ENCODE measurements at regions of chr17 and their contacts with region 1.

Region 1: DNA sequence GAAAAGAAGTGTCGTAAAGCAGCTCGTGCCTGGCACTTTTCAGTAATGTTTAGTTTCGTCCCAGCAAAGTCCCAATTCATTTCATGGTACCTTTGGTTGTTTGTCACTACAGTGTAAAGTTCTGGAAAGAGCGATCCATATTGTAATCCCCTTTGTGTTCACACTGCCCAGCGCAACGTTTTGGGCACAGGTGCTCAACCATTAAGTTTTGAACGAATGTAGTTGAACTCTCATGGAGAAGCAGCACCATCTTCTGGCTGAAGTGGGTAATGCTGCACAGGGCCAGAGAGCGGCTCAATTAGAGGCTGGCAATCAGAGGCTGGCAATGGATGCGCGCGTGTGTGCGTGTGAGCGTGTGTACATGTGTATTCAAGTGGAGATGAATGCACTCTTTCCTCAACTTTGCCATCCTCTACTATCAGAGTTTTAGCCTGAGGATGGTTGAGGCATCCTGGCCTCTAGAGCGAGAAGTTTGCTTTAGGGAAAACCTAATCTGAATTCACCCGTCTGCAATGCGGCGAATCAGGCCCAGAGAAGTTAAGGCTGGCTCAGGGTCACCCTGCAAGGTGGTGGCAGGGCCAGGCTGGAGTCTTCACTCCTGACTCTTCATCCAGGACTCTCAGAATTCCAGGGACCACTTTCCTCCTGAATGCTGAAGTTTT is 29.9 kb downstream of the DYNLL2 start:
- DNase-seq: peak; percentile 68
- ATAC-seq: peak; percentile 95
- H3K4me3 Mint-ChIP-seq: no peak overlapping the region
- H3K27ac Mint-ChIP-seq: no peak overlapping the region
- H3K4me1 Mint-ChIP-seq: no peaks in the 10 kb centered on the region
- H3K27me3 Mint-ChIP-seq: peaks cover 25% of the 10 kb centered on the region
- CTCF ChIP-seq: peak; percentile 53

Region 2: GRCh38 chr17:57861000-57861789 is 251.9 kb before region 1 on chr17:
- CTCF ChIA-PET with region 1: interaction called, 58 read pairs
- POLR2A ChIA-PET with region 1: no interaction called
- intact Hi-C with region 1: loop called (anchors 1 kb)
- DNase-seq: no peak
- ATAC-seq: peak; percentile 69
- H3K4me3 Mint-ChIP-seq: peak overlapping the region; percentile 79
- H3K27ac Mint-ChIP-seq: no peak overlapping the region
- H3K4me1 Mint-ChIP-seq: peaks cover 14% of the 10 kb centered on the region
- H3K27me3 Mint-ChIP-seq: peaks cover 21% of the 10 kb centered on the region
- CTCF ChIP-seq: no peak

Region 3: GRCh38 chr17:57892146-57892828 is 220.8 kb before region 1 on chr17:
- CTCF ChIA-PET with region 1: interaction called, 3 read pairs
- POLR2A ChIA-PET with region 1: no interaction called
- intact Hi-C with region 1: loop called (anchors 1 kb)
- DNase-seq: peak; percentile 77
- ATAC-seq: peak; percentile 98
- H3K4me3 Mint-ChIP-seq: no peak overlapping the region
- H3K27ac Mint-ChIP-seq: no peak overlapping the region
- H3K4me1 Mint-ChIP-seq: no peaks in the 10 kb centered on the region
- H3K27me3 Mint-ChIP-seq: peaks cover 36% of the 10 kb centered on the region
- CTCF ChIP-seq: peak; percentile 62

Region 4: DNA sequence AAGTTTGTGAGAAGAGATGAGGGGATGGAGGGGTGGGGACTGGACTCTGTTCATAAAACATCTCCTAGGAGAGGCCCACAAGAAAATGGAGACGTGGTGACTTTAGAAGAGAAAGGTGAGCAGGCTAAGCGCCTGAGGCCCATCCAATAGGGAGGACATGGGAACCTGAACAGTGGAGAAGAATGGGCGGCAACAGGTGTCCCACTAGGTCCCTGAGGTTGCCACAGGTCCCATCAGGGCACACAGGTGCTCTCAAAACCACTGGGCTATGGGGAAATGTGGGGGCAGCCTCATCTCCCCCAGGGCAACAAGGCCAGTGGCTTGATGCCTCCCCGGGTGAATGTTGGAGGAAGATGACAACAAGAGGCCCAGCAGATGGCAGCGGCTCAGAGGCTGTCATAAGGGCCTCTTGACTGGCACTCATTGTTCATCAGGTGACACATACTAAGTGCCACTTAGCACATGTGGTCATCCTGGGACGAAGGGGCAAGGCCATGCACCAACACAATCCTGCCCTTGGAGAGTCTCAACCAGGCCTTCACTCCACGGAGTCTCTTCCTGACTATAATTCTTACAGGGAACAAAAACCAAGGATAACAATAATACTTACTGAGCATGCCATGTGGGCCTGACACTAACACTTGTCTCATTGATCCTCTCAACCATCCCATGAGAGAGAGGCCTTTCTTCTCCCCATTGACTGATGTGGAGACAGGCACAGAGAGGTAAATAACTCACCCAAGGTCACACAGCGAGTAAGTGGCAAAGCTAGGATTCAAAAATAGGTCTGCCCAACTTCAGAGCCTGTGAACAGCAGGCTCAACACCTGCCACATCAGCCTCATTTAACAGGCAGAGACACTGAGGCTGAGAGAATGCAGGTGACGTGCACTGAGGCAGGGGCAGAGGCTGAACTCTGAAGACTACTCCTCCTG is 195.9 kb before region 1 on chr17:
- CTCF ChIA-PET with region 1: no interaction called
- POLR2A ChIA-PET with region 1: no interaction called
- intact Hi-C with region 1: loop called (anchors 1 kb)
- DNase-seq: no peak
- ATAC-seq: peak; percentile 72
- H3K4me3 Mint-ChIP-seq: no peak overlapping the region
- H3K27ac Mint-ChIP-seq: no peak overlapping the region
- H3K4me1 Mint-ChIP-seq: no peaks in the 10 kb centered on the region
- H3K27me3 Mint-ChIP-seq: peaks cover 26% of the 10 kb centered on the region
- CTCF ChIP-seq: no peak

Region 5: GRCh38 chr17:58082870-58083490 is 30.1 kb before region 1 on chr17 and contains the start of gene DYNLL2:
- CTCF ChIA-PET with region 1: interaction called, 3 read pairs
- POLR2A ChIA-PET with region 1: no interaction called
- intact Hi-C with region 1: loop called (anchors 1 kb)
- DNase-seq: peak; percentile 73
- ATAC-seq: peak; percentile 85
- H3K4me3 Mint-ChIP-seq: peak within 1 kb of the TSS; percentile 86
- H3K27ac Mint-ChIP-seq: peak within 1 kb of the TSS; percentile 80
- H3K4me1 Mint-ChIP-seq: peaks cover 35% of the 10 kb centered on the region
- H3K27me3 Mint-ChIP-seq: no peaks in the 10 kb centered on the region
- CTCF ChIP-seq: no peak
- total RNA-seq, gene DYNLL2: 19.5 and 19.6 TPM in 2 replicates

Region 6: GRCh38 chr17:58219001-58219788 is 106.1 kb after region 1 on chr17 and contains the start of gene MKS1:
- CTCF ChIA-PET with region 1: no interaction called
- POLR2A ChIA-PET with region 1: no interaction called
- intact Hi-C with region 1: no loop called
- DNase-seq: peak; percentile 91
- ATAC-seq: peak; percentile 96
- H3K4me3 Mint-ChIP-seq: peak within 1 kb of the TSS; percentile 91
- H3K27ac Mint-ChIP-seq: peak within 1 kb of the TSS; percentile 96
- H3K4me1 Mint-ChIP-seq: peaks cover 43% of the 10 kb centered on the region
- H3K27me3 Mint-ChIP-seq: peaks cover 2% of the 10 kb centered on the region
- CTCF ChIP-seq: no peak
- total RNA-seq, gene MKS1: 16.0 and 17.3 TPM in 2 replicates

Measured in activated B cell treated with CpG ODN at 0.5 μM for 24 hours (primary cell).